ENCODE measurements at regions of chr4 and their contacts with region 1.

Region 1: DNA sequence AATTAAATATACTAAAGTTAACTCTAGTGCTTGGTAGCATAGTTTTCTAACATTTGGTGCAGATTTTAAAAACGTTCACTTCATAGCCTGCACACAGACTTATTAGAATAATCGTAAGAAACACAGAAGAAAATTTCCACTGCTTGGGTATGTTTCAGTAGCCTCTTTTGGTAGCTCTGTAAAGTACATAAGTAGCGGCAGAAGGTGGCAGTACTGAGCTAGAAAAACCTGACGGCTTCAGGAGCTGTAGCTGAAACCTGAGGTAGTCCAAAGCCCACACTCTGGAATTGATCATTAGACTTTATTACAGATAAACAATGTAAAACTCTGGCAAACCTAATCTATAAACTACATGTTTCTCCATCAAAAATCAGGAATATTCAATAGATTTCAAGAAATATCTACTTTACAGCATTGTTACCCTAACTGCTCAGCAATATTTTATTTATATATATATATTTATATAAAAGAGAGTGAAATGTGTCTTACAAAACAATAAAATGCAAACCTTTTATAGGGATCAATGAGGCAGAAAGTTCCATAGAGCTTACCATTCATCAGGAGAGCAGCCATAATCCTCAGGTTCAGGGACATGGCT is 88.2 kb downstream of the ATP8A1 start:
- DNase-seq: peak; percentile 25
- ATAC-seq: peak; percentile 96
- H3K4me3 ChIP-seq: no peak overlapping the region
- H3K27ac ChIP-seq: no peak overlapping the region
- H3K4me1 ChIP-seq: no peaks in the 10 kb centered on the region
- H3K27me3 ChIP-seq: no peaks in the 10 kb centered on the region
- CTCF ChIP-seq: peak; percentile 59 to 73 (median 65)
- EP300 ChIP-seq: no peak
- POLR2A ChIP-seq: no peak
- RAD21 ChIP-seq: peak; percentile 94

Region 2: DNA sequence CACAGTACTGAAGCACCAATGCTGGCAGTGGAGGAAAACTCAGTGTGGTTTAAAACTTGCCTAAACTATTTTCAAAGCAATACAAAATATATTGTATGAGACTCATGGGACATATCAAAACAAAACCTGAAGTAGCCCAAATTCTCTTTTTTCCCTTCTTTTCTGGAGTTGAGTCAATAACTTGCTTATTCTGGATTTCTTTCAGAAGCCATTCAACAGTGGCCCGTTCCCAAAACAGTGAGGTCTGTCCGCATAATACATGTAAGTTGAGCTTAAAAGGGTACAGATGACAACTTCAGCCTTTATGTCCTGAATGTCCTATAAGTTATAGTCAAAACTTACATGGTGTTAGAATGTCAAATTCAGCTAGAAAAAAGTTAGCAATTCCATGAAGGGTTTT is 70.7 kb before region 1 on chr4:
- CTCF ChIA-PET with region 1: no interaction called
- POLR2A ChIA-PET with region 1: no interaction called
- RAD21 ChIA-PET with region 1: no interaction called
- SMC1A ChIA-PET with region 1: no interaction called
- in situ Hi-C with region 1: no loop called
- intact Hi-C with region 1: no loop called
- DNase-seq: no peak
- ATAC-seq: no peak
- H3K4me3 ChIP-seq: no peak overlapping the region
- H3K27ac ChIP-seq: no peak overlapping the region
- H3K4me1 ChIP-seq: no peaks in the 10 kb centered on the region
- H3K27me3 ChIP-seq: no peaks in the 10 kb centered on the region
- CTCF ChIP-seq: no peak
- EP300 ChIP-seq: no peak
- POLR2A ChIP-seq: no peak
- RAD21 ChIP-seq: no peak

Region 3: GRCh38 chr4:42554072-42554471 is 14.6 kb before region 1 on chr4:
- CTCF ChIA-PET with region 1: interaction called, 12 read pairs
- POLR2A ChIA-PET with region 1: no interaction called
- RAD21 ChIA-PET with region 1: interaction called, 10 read pairs
- SMC1A ChIA-PET with region 1: interaction called, 15 read pairs
- in situ Hi-C with region 1: no loop called
- intact Hi-C with region 1: no loop called
- DNase-seq: no peak
- ATAC-seq: no peak
- H3K4me3 ChIP-seq: no peak overlapping the region
- H3K27ac ChIP-seq: no peak overlapping the region
- H3K4me1 ChIP-seq: no peaks in the 10 kb centered on the region
- H3K27me3 ChIP-seq: no peaks in the 10 kb centered on the region
- CTCF ChIP-seq: no peak
- EP300 ChIP-seq: no peak
- POLR2A ChIP-seq: no peak
- RAD21 ChIP-seq: no peak

Region 4: DNA sequence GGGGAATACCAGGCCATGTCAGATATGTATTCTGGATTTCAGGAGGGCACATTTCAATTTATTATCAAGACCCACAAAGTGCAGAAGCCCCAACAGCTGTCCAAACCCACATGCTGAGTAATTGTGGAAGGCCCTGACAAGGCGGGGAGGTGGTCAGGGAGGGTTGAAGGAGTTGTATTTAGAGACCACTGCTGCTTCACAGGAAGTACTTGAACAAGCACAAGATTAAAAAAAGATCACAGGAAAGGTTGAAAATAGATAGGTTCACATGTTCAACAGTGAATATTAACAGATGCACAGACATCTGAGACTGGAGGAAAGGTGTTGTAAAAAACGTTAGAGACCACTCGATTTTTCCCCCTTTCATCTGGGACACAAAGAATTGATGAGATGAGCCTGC is 70.3 kb after region 1 on chr4:
- CTCF ChIA-PET with region 1: interaction called, 7 read pairs
- POLR2A ChIA-PET with region 1: no interaction called
- RAD21 ChIA-PET with region 1: interaction called, 15 read pairs
- SMC1A ChIA-PET with region 1: no interaction called
- in situ Hi-C with region 1: no loop called
- intact Hi-C with region 1: no loop called
- DNase-seq: peak; percentile 92
- ATAC-seq: peak; percentile 72
- H3K4me3 ChIP-seq: peak overlapping the region; percentile 43
- H3K27ac ChIP-seq: peak overlapping the region; percentile 98
- H3K4me1 ChIP-seq: peaks cover 74% of the 10 kb centered on the region
- H3K27me3 ChIP-seq: no peaks in the 10 kb centered on the region
- CTCF ChIP-seq: no peak
- EP300 ChIP-seq: peak; percentile 81 to 96
- POLR2A ChIP-seq: no peak
- RAD21 ChIP-seq: peak; percentile 2; the same call in 1 of the 2 replicates

Region 5: DNA sequence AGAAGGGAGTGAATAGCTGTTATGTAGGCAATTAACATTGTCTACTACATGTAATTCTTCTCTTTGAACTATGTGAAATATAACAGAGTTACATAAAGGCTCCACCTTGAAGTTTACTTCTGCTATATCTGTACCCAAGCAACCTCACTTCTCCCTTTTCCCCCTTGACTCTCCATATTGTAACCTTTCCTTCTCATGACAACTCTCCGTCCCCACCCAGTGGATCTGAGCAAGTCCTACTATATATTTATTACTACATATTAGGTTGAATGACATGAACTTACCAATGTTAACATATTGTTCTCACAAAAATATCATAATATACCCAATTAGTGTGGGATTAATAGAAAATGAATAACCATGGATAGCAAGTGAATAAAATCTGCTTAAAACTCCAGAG is 181.4 kb after region 1 on chr4:
- CTCF ChIA-PET with region 1: interaction called, 18 read pairs
- POLR2A ChIA-PET with region 1: no interaction called
- RAD21 ChIA-PET with region 1: interaction called, 25 read pairs
- SMC1A ChIA-PET with region 1: interaction called, 36 read pairs
- in situ Hi-C with region 1: loop called (anchors 5 kb)
- intact Hi-C with region 1: loop called (anchors 1 kb)
- DNase-seq: peak; percentile 3
- ATAC-seq: peak; percentile 94
- H3K4me3 ChIP-seq: no peak overlapping the region
- H3K27ac ChIP-seq: no peak overlapping the region
- H3K4me1 ChIP-seq: no peaks in the 10 kb centered on the region
- H3K27me3 ChIP-seq: no peaks in the 10 kb centered on the region
- CTCF ChIP-seq: peak; percentile 31 to 62 (median 33); a peak in 4 of 6 replicates
- EP300 ChIP-seq: no peak
- POLR2A ChIP-seq: no peak
- RAD21 ChIP-seq: peak; percentile 92

Region 6: DNA sequence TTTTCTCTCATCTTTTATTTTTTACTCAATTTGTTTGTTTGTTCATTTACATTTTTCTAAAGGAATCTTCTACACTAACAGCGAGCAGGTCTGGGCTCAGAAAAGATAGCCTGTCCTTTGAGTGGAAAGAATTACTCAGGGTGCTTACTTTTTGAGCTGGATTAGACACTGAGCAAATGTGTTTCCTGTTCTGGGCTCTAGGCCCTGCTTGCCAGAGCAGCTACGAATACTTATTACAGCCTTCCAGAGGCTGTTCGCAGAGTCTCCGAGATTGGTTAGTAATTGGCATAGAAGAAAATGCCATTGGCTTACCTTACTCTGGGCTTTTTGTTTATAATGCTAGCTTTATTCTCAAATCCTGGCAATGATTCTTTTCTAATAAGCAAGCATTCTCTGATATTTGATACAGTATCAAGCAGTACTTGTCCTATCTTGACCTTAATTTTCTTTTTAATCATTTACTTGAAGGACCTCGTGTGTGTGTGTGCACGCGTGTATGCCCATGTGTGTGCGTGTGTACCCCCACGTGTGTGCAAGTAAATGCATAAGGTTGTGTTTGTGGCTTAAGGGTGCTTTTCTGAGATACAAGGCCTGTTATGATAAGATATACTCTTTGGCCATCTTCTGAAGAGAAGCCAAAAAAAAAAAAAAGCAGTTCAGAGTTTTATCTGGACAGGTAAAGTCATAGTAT is 247.6 kb after region 1 on chr4:
- CTCF ChIA-PET with region 1: interaction called, 12 read pairs
- POLR2A ChIA-PET with region 1: no interaction called
- RAD21 ChIA-PET with region 1: interaction called, 14 read pairs
- SMC1A ChIA-PET with region 1: interaction called, 7 read pairs
- in situ Hi-C with region 1: no loop called
- intact Hi-C with region 1: loop called (anchors 1 kb)
- DNase-seq: no peak
- ATAC-seq: no peak
- H3K4me3 ChIP-seq: no peak overlapping the region
- H3K27ac ChIP-seq: no peak overlapping the region
- H3K4me1 ChIP-seq: no peaks in the 10 kb centered on the region
- H3K27me3 ChIP-seq: no peaks in the 10 kb centered on the region
- CTCF ChIP-seq: no peak
- EP300 ChIP-seq: no peak
- POLR2A ChIP-seq: no peak
- RAD21 ChIP-seq: no peak

Measured in GM12878 (cell line).